Activated CD8-positive, alpha-beta memory T cell treated with anti-CD3 and anti-CD28 coated beads, Interleukin-2, amount 10 ng/mL, durations not matched to agents 7 days and 5 days (primary cell): ENCODE measurements at regions of chr10 and their contacts with region 1.

Region 1: DNA sequence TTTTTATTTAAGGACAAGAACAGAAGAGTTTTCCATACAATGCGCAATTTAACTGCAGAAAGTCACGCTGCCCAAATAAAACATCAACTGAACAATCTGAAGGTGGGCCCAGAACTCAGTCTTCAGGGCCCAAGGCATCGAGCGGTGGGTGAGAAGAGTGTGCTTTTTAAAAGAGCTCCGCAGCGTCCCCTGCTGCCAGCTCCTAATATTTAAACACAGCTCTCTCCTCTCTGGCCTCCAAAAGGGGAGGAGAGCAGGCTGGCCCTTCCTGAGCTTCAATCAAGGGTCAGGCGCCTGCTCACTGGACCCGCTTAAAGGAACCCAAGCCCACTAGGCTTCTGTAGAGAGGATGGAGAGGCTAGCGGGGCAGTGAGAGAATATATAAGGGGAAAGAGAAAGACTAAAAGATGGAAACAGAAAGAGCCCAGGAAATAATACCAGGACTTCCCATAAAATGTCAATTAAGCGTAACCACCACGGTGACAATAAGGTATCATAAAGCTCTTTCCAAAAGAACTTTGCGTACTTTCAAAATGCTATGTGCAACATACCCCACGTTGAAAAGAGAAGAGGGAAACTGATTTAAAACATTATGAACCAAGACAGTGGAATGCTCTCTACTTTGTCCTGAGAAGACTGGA is 2.8 kb downstream of the FAM53B start:
- DNase-seq: peak; percentile 84
- ATAC-seq: peak; percentile 62
- H3K4me3 Mint-ChIP-seq: peak overlapping the region; percentile 80
- H3K27ac Mint-ChIP-seq: peak overlapping the region; percentile 87
- H3K4me1 Mint-ChIP-seq: peaks cover 74% of the 10 kb centered on the region
- H3K27me3 Mint-ChIP-seq: peaks cover 2% of the 10 kb centered on the region

Region 2: DNA sequence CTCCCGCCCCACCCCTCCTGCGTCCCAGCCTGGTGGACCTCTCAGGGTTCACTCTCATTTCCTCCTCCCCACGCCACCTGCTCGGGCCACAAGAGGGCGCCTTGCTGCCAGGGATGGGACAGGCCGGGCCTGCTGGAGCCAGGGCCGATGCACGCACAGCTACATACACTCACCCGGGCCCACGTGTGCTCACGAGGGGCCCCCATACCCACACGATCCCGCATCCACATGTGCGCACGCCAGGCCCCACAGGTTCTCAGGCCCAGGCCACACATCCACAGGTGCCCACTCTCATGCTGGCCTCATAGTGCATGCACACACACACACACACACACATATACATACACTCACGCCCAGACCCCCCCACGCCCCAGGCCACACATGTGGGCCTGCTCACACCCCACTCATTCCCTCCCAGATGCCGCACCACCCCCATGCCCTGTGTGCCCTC is 211.2 kb before region 1 on chr10:
- CTCF ChIA-PET with region 1: interaction called, 34 read pairs
- DNase-seq: peak; percentile 91
- ATAC-seq: peak; percentile 99
- H3K4me3 Mint-ChIP-seq: no peak overlapping the region
- H3K27ac Mint-ChIP-seq: no peak overlapping the region
- H3K4me1 Mint-ChIP-seq: peaks cover 4% of the 10 kb centered on the region
- H3K27me3 Mint-ChIP-seq: no peaks in the 10 kb centered on the region

Region 3: DNA sequence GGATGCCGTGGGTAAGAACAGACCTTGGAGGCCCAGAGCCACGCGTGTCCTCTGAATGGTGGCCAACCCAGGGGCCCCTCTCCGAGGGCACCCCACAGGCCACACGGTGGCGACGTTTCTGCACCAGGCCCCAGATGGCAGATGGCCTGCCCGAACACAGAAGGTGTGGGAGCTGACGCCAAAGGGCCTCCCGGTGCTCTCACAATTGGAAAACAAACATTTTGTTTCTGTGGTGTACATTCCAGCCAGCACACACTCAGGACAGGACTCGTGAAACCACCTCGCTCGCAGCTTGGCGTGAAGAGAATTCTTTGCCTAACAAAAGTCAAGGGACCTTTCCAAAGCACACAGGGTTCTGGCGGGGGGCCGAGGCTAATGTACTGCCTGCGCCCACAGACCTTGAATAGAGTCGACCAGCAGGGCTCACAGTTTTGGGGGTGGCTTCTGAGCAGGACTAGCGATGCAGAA is 109.3 kb before region 1 on chr10:
- CTCF ChIA-PET with region 1: interaction called, 29 read pairs
- DNase-seq: peak; percentile 53
- ATAC-seq: no peak
- H3K4me3 Mint-ChIP-seq: no peak overlapping the region
- H3K27ac Mint-ChIP-seq: peak overlapping the region; percentile 26
- H3K4me1 Mint-ChIP-seq: peaks cover 40% of the 10 kb centered on the region
- H3K27me3 Mint-ChIP-seq: no peaks in the 10 kb centered on the region

Region 4: DNA sequence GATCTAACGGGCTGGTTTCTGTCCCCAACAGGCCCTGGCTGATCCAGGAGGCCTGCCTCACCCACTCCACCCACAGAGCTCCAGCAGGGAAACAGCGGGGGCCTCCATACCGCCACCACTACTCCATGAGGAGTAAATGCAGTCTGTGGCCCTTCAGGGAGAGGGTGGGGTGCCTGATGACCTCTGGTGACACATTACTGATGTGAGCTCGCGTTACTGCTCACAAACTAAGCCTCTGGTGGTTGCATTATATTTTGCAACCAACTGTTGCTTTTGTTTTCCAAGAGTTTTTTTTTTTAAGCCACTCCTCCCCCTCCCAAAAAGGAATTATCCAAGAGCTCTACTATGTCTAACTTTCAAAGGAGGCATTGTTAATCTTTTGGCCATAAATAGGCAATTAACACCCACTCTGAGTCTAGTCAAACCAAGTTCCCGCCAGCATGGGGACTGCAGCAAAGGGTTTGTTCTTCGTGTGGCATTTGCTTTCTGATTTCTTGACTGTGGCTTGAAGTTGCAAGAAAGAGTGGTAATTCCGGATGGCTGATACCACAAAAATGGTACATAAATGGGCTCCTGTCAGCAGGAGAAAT is 69.8 kb before region 1 on chr10:
- CTCF ChIA-PET with region 1: interaction called, 25 read pairs
- DNase-seq: no peak
- ATAC-seq: peak; percentile 54
- H3K4me3 Mint-ChIP-seq: no peak overlapping the region
- H3K27ac Mint-ChIP-seq: peak overlapping the region; percentile 78
- H3K4me1 Mint-ChIP-seq: peaks cover 54% of the 10 kb centered on the region
- H3K27me3 Mint-ChIP-seq: no peaks in the 10 kb centered on the region

Region 5: DNA sequence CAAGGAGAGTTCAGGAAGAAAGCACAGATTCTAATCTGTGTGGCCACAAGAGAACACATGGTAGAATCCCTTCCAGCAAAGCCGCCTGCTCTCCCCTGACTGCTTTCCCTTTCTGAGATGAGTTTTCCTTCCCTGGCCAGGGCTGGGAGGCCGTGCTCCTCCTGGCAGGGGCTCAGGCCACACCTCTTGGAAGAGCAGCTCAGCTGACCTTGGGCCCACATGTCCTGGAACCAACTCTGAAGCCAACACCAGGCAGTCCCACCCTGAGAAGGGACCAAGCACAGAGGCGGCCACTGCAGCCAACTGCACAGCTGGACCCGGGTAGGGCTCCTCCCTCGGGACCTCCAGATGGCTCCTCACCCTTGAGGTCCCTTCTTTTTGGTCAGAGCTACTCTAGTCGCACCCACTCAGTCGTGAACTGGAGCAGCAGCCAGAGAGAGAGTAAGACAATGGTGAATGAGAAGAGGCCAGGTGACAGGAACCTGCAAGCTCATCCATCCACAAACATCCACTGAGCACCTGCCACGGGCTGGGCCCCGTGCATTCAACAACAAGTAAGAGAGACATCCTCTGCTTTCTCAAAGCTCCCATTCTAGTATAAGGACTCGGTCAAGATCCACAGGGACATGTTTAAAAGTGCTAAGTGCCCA is 37.5 kb before region 1 on chr10:
- CTCF ChIA-PET with region 1: interaction called, 52 read pairs
- DNase-seq: no peak
- ATAC-seq: no peak
- H3K4me3 Mint-ChIP-seq: no peak overlapping the region
- H3K27ac Mint-ChIP-seq: peak overlapping the region; percentile 96
- H3K4me1 Mint-ChIP-seq: peaks cover 96% of the 10 kb centered on the region
- H3K27me3 Mint-ChIP-seq: no peaks in the 10 kb centered on the region

Region 6: GRCh38 chr10:124755581-124755980 is 14.2 kb after region 1 on chr10:
- CTCF ChIA-PET with region 1: interaction called, 19 read pairs
- DNase-seq: no peak
- ATAC-seq: no peak
- H3K4me3 Mint-ChIP-seq: no peak overlapping the region
- H3K27ac Mint-ChIP-seq: no peak overlapping the region
- H3K4me1 Mint-ChIP-seq: peaks cover under 1% of the 10 kb centered on the region
- H3K27me3 Mint-ChIP-seq: no peaks in the 10 kb centered on the region